Activated CD8-positive, alpha-beta T cell treated with anti-CD3 and anti-CD28 coated beads for 36 hours (primary cell): ENCODE measurements at regions of chr5 and their contacts with region 1.

Region 1: DNA sequence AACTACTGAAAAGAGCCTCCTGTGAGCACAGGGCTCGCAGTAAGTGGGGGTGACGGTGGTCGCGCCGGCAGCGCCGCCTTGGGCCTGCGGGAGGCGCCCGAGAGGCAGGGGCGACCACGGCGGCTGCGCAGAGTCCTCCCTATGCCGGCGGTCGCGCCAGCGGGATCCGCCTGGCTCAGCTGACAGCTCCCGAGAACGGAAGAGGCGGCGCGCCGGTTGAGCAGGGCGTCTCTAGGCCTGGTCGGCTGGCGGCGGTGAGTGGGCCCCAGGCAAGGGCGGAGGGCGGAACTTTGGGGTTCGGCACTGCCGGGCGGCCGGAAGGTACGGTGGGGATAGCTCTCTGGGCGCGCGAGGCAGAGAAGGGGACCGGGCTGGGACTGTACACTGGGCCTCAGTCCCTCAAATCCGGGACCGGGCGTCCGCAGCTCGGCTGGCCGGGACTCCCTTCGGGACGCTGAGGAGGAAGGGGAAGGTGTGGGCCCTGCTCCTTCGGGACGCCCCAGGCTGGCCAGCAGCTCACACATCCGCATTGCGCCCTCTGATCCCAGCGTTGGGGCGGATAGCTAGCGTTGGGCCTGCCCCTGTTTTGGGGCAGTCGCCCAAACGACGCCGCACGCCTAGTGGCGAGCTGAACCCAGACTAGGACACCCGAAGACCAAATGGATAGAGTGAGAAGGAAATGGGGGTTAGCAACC is at the start of gene RNF14:
- DNase-seq: peak; percentile 97
- ATAC-seq: peak; percentile 96
- H3K4me3 Mint-ChIP-seq: peak within 1 kb of the TSS; percentile 85
- H3K27ac Mint-ChIP-seq: peak within 1 kb of the TSS; percentile 97
- H3K4me1 Mint-ChIP-seq: peaks cover 33% of the 10 kb centered on the region
- H3K27me3 Mint-ChIP-seq: no peaks in the 10 kb centered on the region
- CTCF ChIP-seq: peak; percentile 99
- total RNA-seq, gene RNF14: 34.1 to 35.0 TPM

Region 2: GRCh38 chr5:141681695-141682641 is 287.1 kb before region 1 on chr5 and contains the start of gene ARAP3:
- CTCF ChIA-PET with region 1: interaction called, 11 read pairs
- POLR2A ChIA-PET with region 1: interaction called, 3 read pairs
- intact Hi-C with region 1: no loop called
- DNase-seq: peak; percentile 54
- ATAC-seq: peak; percentile 73
- H3K4me3 Mint-ChIP-seq: peak within 1 kb of the TSS; percentile 72
- H3K27ac Mint-ChIP-seq: peak within 1 kb of the TSS; percentile 68
- H3K4me1 Mint-ChIP-seq: peaks cover 24% of the 10 kb centered on the region
- H3K27me3 Mint-ChIP-seq: no peaks in the 10 kb centered on the region
- CTCF ChIP-seq: no peak
- total RNA-seq, gene ARAP3: 5.9 to 7.2 TPM

Region 3: DNA sequence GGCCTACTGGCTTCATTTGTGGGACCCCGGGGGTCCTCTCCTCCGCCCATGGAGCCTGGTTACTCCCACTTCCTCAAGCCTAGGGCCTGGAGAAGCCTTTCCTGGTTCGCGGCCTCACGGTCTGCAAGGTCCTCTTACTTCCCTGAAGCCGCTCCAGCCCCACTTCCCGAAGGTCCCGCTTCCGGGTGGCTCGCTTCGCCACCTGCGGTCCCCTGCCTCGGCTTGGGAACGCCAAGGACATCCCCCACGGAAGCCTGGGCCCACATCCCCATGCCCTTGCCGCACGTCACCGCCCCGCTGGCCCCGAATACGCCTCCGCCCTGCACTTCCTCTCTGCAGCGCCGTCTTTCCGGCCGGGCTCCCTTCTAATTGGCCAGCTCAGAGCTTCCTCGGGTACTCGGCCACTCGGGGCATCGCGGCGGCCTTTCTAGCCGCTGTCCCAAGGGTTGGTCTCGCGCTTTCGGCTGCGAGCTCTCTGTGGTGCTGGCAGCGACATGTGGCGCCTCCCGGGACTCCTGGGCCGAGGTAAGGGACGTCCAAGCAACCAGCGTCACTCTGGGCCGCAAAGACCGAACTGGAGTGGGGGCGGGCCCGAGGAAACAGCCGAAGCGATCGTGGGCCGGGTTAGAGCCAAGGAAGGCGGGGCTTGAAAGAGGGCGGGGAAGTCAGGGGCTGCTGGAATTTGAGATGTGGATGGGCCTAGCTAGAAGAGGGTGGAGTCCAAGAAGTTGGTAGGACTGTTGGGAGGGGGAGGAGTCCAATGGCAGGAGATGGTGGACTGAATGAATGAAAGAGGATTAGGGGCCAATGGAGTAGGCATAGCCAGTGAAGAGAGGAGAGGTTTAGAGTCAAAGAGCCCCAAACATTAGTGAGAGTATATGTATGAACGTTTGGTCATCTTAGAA is 45.4 kb before region 1 on chr5 and contains the start of gene DELE1:
- CTCF ChIA-PET with region 1: interaction called, 15 read pairs
- POLR2A ChIA-PET with region 1: interaction called, 7 read pairs
- intact Hi-C with region 1: no loop called
- DNase-seq: peak; percentile 96
- ATAC-seq: peak; percentile 93
- H3K4me3 Mint-ChIP-seq: peak within 1 kb of the TSS; percentile 82
- H3K27ac Mint-ChIP-seq: peak within 1 kb of the TSS; percentile 91
- H3K4me1 Mint-ChIP-seq: peaks cover 24% of the 10 kb centered on the region
- H3K27me3 Mint-ChIP-seq: no peaks in the 10 kb centered on the region
- CTCF ChIP-seq: no peak
- total RNA-seq, gene DELE1: 50.1 to 57.4 TPM

Region 4: GRCh38 chr5:141992349-141992963 is 23.4 kb after region 1 on chr5:
- CTCF ChIA-PET with region 1: interaction called, 23 read pairs
- POLR2A ChIA-PET with region 1: interaction called, 4 read pairs
- intact Hi-C with region 1: no loop called
- DNase-seq: peak; percentile 93
- ATAC-seq: peak; percentile 90
- H3K4me3 Mint-ChIP-seq: no peak overlapping the region
- H3K27ac Mint-ChIP-seq: no peak overlapping the region
- H3K4me1 Mint-ChIP-seq: peaks cover 15% of the 10 kb centered on the region
- H3K27me3 Mint-ChIP-seq: no peaks in the 10 kb centered on the region
- CTCF ChIP-seq: peak; percentile 89

Region 5: GRCh38 chr5:142006363-142007236 is 37.5 kb after region 1 on chr5:
- CTCF ChIA-PET with region 1: interaction called, 55 read pairs
- POLR2A ChIA-PET with region 1: interaction called, 4 read pairs
- intact Hi-C with region 1: loop called (anchors 5 kb)
- DNase-seq: peak; percentile 85
- ATAC-seq: peak; percentile 86
- H3K4me3 Mint-ChIP-seq: peak overlapping the region; percentile 48
- H3K27ac Mint-ChIP-seq: peak overlapping the region; percentile 95
- H3K4me1 Mint-ChIP-seq: peaks cover 76% of the 10 kb centered on the region
- H3K27me3 Mint-ChIP-seq: no peaks in the 10 kb centered on the region
- CTCF ChIP-seq: no peak

Region 6: DNA sequence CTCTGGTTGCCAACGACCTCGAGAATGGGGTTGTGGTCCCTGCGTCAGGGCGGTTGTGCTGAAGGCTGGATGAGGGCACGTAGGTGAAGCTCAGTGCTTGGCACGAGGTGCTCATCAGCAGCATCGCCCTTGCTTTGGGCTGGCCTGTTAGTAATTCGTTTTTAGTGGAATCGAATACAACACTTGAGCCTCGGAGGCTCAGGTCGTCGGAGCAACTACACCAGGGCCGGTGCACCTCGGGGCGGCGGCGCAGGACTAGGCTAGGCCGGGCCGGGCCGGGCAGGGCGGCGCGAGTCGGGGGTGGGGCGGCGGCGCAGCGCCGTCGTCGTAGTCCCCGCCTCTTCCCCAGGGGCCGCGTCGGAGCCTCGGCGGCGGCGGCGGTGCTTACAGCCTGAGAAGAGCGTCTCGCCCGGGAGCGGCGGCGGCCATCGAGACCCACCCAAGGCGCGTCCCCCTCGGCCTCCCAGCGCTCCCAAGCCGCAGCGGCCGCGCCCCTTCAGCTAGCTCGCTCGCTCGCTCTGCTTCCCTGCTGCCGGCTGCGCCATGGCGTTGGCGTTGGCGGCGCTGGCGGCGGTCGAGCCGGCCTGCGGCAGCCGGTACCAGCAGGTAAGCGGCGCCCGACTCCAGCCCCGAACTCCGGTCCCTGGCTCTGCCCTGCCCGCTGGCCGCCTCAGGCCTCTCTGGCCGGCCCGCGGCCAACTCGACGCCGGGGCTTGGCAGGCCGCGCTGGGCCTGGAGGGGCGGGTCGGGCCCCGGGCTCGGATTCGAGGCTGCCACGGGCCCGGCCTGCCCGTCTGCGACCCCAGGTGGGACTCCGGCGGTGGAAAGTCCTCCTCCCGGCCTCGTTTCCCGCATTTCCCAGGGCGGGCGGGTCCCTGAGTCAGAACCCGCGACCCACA is 139.6 kb after region 1 on chr5 and contains the start of gene NDFIP1:
- CTCF ChIA-PET with region 1: interaction called, 10 read pairs
- POLR2A ChIA-PET with region 1: interaction called, 13 read pairs
- intact Hi-C with region 1: no loop called
- DNase-seq: peak; percentile 88
- ATAC-seq: peak; percentile 84
- H3K4me3 Mint-ChIP-seq: peak within 1 kb of the TSS; percentile 93
- H3K27ac Mint-ChIP-seq: peak within 1 kb of the TSS; percentile 96
- H3K4me1 Mint-ChIP-seq: peaks cover 65% of the 10 kb centered on the region
- H3K27me3 Mint-ChIP-seq: no peaks in the 10 kb centered on the region
- CTCF ChIP-seq: no peak
- total RNA-seq, gene NDFIP1: 93.8 to 96.9 TPM

Region 7: DNA sequence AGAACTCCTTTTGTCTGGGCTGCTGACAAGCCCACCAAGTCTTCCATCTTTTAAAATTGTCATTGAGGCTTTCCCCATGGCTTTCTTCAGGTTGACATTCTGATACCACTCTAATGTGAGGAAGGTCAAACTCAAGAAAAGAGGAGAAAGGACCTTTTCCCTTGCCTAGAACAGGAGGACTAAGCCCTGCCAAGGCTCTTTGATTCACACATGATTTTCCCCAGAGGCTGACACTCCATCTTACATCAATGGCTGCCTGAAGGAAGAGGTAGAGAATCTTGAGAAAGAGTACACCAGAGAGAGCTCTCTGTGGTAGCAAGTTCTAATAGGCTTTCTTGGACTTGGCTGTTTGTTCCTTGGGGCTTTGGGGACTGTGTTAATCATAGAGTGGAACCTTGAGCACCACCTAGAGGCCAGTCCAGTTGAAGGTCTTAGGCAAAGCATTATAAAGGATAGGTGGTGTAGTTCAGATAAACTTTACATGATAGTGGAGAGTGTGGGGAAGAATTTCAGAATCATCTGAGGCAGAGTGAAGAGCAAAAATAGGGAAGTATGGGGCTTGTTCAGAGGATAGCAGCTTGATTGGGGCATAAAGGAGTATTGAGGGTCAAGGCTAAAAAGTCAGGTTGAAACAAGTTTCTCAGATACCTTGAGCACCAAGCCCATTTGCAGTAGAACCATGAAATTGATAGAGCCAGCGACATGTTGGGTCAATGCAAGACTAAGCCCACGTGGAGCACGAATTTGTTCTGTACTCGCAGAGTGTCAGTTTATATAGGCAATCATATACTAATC is 176.2 kb after region 1 on chr5:
- CTCF ChIA-PET with region 1: interaction called, 26 read pairs
- POLR2A ChIA-PET with region 1: interaction called, 5 read pairs
- intact Hi-C with region 1: no loop called
- DNase-seq: peak; percentile 84
- ATAC-seq: peak; percentile 90
- H3K4me3 Mint-ChIP-seq: no peak overlapping the region
- H3K27ac Mint-ChIP-seq: no peak overlapping the region
- H3K4me1 Mint-ChIP-seq: peaks cover 5% of the 10 kb centered on the region
- H3K27me3 Mint-ChIP-seq: no peaks in the 10 kb centered on the region
- CTCF ChIP-seq: peak; percentile 65